ENCODE measurements at regions of chrX and their contacts with region 1.

Region 1: GRCh38 chrX:137031517-137032340 is 2.1 kb downstream of the GPR101 start:
- DNase-seq: peak; percentile 61
- H3K4me3 Mint-ChIP-seq: no peak overlapping the region
- H3K27ac Mint-ChIP-seq: no peak overlapping the region
- H3K4me1 Mint-ChIP-seq: peaks cover 7% of the 10 kb centered on the region
- H3K27me3 Mint-ChIP-seq: peaks cover 39% of the 10 kb centered on the region

Region 2: GRCh38 chrX:136608295-136609171 is 423.2 kb before region 1 on chrX:
- CTCF ChIA-PET with region 1: no interaction called
- POLR2A ChIA-PET with region 1: no interaction called
- intact Hi-C with region 1: loop called (anchors 10 kb)
- DNase-seq: peak; percentile 72
- H3K4me3 Mint-ChIP-seq: peak overlapping the region; percentile 41
- H3K27ac Mint-ChIP-seq: peak overlapping the region; percentile 61
- H3K4me1 Mint-ChIP-seq: peaks cover 57% of the 10 kb centered on the region
- H3K27me3 Mint-ChIP-seq: no peaks in the 10 kb centered on the region

Region 3: DNA sequence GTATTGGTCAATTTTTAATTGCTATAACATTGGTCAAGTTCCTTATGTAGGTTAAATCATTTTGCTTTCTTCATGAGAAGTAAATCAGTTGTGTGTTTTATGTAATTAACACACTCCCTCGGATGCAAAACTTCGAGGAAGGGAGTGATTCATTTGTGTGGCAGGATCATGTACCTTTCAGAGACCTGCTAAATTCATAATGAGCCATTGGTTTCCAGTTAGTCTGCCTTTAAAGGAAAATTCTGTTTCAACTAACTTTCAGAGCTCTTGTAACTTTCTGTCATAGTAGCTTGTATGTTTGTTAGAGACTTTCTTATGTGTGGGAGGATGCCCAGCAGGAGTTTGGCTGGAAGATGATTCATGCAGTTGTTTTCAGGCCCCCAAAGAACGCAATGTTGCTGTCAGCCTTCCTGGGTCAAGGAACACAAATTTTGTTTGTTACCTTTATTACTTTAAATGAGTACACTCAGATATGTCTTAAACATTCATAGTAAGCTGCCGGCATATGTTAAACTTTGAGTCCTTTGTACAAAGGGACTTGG is 70.1 kb before region 1 on chrX:
- CTCF ChIA-PET with region 1: no interaction called
- POLR2A ChIA-PET with region 1: no interaction called
- intact Hi-C with region 1: loop called (anchors 5 kb)
- DNase-seq: peak; percentile 13
- H3K4me3 Mint-ChIP-seq: no peak overlapping the region
- H3K27ac Mint-ChIP-seq: peak overlapping the region; percentile 67
- H3K4me1 Mint-ChIP-seq: peaks cover 13% of the 10 kb centered on the region
- H3K27me3 Mint-ChIP-seq: no peaks in the 10 kb centered on the region

Region 4: GRCh38 chrX:136999024-136999423 is 32.7 kb before region 1 on chrX:
- CTCF ChIA-PET with region 1: no interaction called
- POLR2A ChIA-PET with region 1: no interaction called
- intact Hi-C with region 1: no loop called
- DNase-seq: no peak
- H3K4me3 Mint-ChIP-seq: no peak overlapping the region
- H3K27ac Mint-ChIP-seq: no peak overlapping the region
- H3K4me1 Mint-ChIP-seq: no peaks in the 10 kb centered on the region
- H3K27me3 Mint-ChIP-seq: no peaks in the 10 kb centered on the region

Region 5: GRCh38 chrX:137051978-137052642 is 20.4 kb after region 1 on chrX:
- CTCF ChIA-PET with region 1: interaction called, 6 read pairs
- POLR2A ChIA-PET with region 1: no interaction called
- intact Hi-C with region 1: loop called (anchors 1 kb)
- DNase-seq: peak; percentile 86
- H3K4me3 Mint-ChIP-seq: peak overlapping the region; percentile 83
- H3K27ac Mint-ChIP-seq: no peak overlapping the region
- H3K4me1 Mint-ChIP-seq: peaks cover 8% of the 10 kb centered on the region
- H3K27me3 Mint-ChIP-seq: peaks cover 12% of the 10 kb centered on the region

Region 6: GRCh38 chrX:137151403-137151802 is 119.7 kb after region 1 on chrX:
- CTCF ChIA-PET with region 1: no interaction called
- POLR2A ChIA-PET with region 1: no interaction called
- intact Hi-C with region 1: no loop called
- DNase-seq: no peak
- H3K4me3 Mint-ChIP-seq: no peak overlapping the region
- H3K27ac Mint-ChIP-seq: no peak overlapping the region
- H3K4me1 Mint-ChIP-seq: no peaks in the 10 kb centered on the region
- H3K27me3 Mint-ChIP-seq: peaks cover 19% of the 10 kb centered on the region

Measured in activated CD4-positive, alpha-beta memory T cell treated with anti-CD3 and anti-CD28 coated beads for 36 hours (primary cell).